K562 (cell line): ENCODE measurements at regions of chr16 and their contacts with region 1.

Region 1: GRCh38 chr16:21952793-21953540 is at the start of gene UQCRC2:
- DNase-seq: peak; percentile 91 to 94 (median 92)
- ATAC-seq: peak; percentile 96
- H3K4me3 ChIP-seq: peak within 1 kb of the TSS; percentile 92
- H3K27ac ChIP-seq: peak within 1 kb of the TSS; percentile 98
- H3K4me1 ChIP-seq: peaks cover 4 to 7% of the 10 kb centered on the region in 2 experiments; a peak in 3 of 5 replicates
- H3K27me3 ChIP-seq: no peaks in the 10 kb centered on the region
- CTCF ChIP-seq: no peak
- EP300 ChIP-seq: no peak; the same call in 1 of the 2 replicates
- POLR2A ChIP-seq: peak; percentile 94
- RAD21 ChIP-seq: no peak
- polyA plus RNA-seq, gene UQCRC2: 284 to 424 TPM

Region 2: GRCh38 chr16:22077700-22078313 is 124.8 kb after region 1 on chr16:
- CTCF ChIA-PET with region 1: interaction called, 7 read pairs
- POLR2A ChIA-PET with region 1: interaction called, 6 read pairs
- in situ Hi-C with region 1: no loop called
- intact Hi-C with region 1: loop called (anchors 5 kb)
- DNase-seq: peak; percentile 68 to 74 (median 69)
- ATAC-seq: peak; percentile 86
- H3K4me3 ChIP-seq: no peak overlapping the region
- H3K27ac ChIP-seq: no peak overlapping the region
- H3K4me1 ChIP-seq: no peaks in the 10 kb centered on the region
- H3K27me3 ChIP-seq: no peaks in the 10 kb centered on the region
- CTCF ChIP-seq: peak; percentile 76 to 88 (median 85)
- EP300 ChIP-seq: no peak
- POLR2A ChIP-seq: no peak
- RAD21 ChIP-seq: peak; percentile 83 to 88

Region 3: GRCh38 chr16:22098405-22099255 is 145.7 kb after region 1 on chr16:
- CTCF ChIA-PET with region 1: interaction called, 11 read pairs
- POLR2A ChIA-PET with region 1: interaction called, 4 read pairs
- in situ Hi-C with region 1: no loop called
- intact Hi-C with region 1: loop called (anchors 5 kb)
- DNase-seq: peak; percentile 47 to 72 (median 58)
- ATAC-seq: peak; percentile 98
- H3K4me3 ChIP-seq: no peak overlapping the region
- H3K27ac ChIP-seq: no peak overlapping the region
- H3K4me1 ChIP-seq: no peaks in the 10 kb centered on the region
- H3K27me3 ChIP-seq: no peaks in the 10 kb centered on the region; a peak in 4 of 5 replicates
- CTCF ChIP-seq: peak; percentile 80 to 91 (median 83)
- EP300 ChIP-seq: no peak
- POLR2A ChIP-seq: no peak
- RAD21 ChIP-seq: peak; percentile 36 to 80

Region 4: DNA sequence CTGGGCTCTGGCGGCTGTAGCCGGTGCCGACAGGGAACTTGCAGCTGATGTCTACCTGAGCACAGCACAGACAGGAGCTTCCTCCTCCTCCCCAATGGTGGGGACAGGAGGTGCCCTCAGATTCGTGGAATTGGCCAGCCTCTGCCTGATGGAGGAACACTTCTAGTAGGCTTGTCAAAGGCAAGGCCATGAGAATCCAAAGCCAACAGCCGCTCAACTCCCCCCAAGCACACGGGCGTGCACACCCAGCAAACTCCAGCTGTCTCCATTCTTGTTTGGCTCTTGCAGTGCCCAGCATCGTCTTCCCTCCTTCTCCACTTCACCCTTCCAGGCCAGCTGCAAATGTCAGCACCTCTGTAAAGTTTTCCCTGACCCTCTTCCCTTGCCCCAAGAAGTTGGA is 1264.7 kb after region 1 on chr16:
- CTCF ChIA-PET with region 1: no interaction called
- POLR2A ChIA-PET with region 1: no interaction called
- in situ Hi-C with region 1: no loop called
- intact Hi-C with region 1: no loop called
- DNase-seq: no peak
- ATAC-seq: no peak
- H3K4me3 ChIP-seq: no peak overlapping the region
- H3K27ac ChIP-seq: no peak overlapping the region
- H3K4me1 ChIP-seq: no peaks in the 10 kb centered on the region; a peak in 1 of 5 replicates
- H3K27me3 ChIP-seq: peaks cover 0 to 22% of the 10 kb centered on the region in 2 experiments; a peak in 2 of 5 replicates
- CTCF ChIP-seq: no peak
- EP300 ChIP-seq: no peak
- POLR2A ChIP-seq: no peak
- RAD21 ChIP-seq: no peak